PC-3 (cell line): ENCODE measurements at regions of chr10 and their contacts with region 1.

Region 1: GRCh38 chr10:79155301-79156081 is 86.7 kb downstream of the ZMIZ1 start:
- DNase-seq: peak; percentile 93
- ATAC-seq: no peak
- H3K4me3 ChIP-seq: no peak overlapping the region
- H3K27ac ChIP-seq: peak overlapping the region; percentile 47
- H3K4me1 ChIP-seq: peaks cover 82% of the 10 kb centered on the region
- H3K27me3 ChIP-seq: no peaks in the 10 kb centered on the region
- CTCF ChIP-seq: no peak

Region 2: GRCh38 chr10:79184145-79184625 is 28.7 kb after region 1 on chr10:
- CTCF ChIA-PET with region 1: interaction called, 12 read pairs
- POLR2A ChIA-PET with region 1: interaction called, 5 read pairs
- intact Hi-C with region 1: loop called (anchors 1 kb)
- DNase-seq: peak; percentile 100
- ATAC-seq: peak; percentile 95
- H3K4me3 ChIP-seq: peak overlapping the region; percentile 2; the same call in 1 of the 2 replicates
- H3K27ac ChIP-seq: peak overlapping the region; percentile 67
- H3K4me1 ChIP-seq: peaks cover 35% of the 10 kb centered on the region
- H3K27me3 ChIP-seq: no peaks in the 10 kb centered on the region
- CTCF ChIP-seq: no peak